Activated CD4-positive, alpha-beta T cell treated with anti-CD3 and anti-CD28 coated beads for 36 hours (primary cell): ENCODE measurements at regions of chr3 and their contacts with region 1.

Region 1: DNA sequence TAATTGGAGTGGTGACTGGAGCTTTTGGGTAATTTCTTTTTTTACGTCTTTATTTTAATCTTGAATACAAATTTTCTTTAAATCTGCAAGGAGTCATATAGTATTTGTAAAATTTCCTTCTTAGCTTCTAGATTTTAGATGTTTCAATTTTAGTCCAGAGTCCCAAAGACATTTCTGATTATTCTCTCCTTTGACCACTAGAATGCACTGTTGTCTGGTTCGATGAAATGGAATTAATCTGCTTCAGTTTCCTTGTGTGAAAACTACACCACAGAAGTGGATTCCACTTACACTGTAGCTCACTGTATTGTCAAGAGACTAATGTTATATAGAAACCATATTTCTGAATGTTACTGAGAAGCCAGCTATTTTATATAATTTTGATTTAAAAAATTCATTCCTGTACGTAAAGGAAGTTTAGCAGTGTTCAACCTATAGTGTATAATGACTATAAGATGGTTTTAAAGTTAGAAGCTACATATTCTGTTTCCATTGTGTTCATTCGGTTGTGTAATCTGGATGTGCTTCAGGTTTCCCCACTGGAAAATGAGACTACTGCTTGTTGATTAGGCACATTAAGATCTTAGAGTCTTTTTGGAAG is 6.1 kb downstream of the GRAMD1C start:
- DNase-seq: no peak
- ATAC-seq: no peak
- H3K4me3 Mint-ChIP-seq: no peak overlapping the region
- H3K27ac Mint-ChIP-seq: no peak overlapping the region
- H3K4me1 Mint-ChIP-seq: no peaks in the 10 kb centered on the region
- H3K27me3 Mint-ChIP-seq: no peaks in the 10 kb centered on the region

Region 2: DNA sequence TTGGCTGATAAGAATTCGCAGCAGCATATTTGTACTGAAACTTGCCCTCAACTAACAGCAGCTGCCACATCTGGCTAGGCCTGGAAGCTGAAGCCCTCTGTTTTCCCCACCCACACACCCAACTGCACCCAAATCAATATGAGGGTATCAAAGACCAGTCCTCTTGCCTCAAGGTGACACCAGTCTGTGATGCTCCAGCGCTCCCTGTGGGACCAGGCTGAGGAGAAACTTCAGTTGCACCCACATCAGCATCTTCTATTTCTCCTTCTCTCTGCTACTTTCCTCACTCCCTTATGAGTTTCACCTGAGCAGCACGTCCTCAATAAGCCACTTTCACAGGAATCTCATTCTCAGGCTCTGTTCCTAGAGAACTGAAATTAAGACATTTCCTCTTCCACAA is 24.9 kb before region 1 on chr3:
- CTCF ChIA-PET with region 1: no interaction called
- POLR2A ChIA-PET with region 1: no interaction called
- intact Hi-C with region 1: no loop called
- DNase-seq: no peak
- ATAC-seq: no peak
- H3K4me3 Mint-ChIP-seq: no peak overlapping the region
- H3K27ac Mint-ChIP-seq: no peak overlapping the region
- H3K4me1 Mint-ChIP-seq: peaks cover under 1% of the 10 kb centered on the region
- H3K27me3 Mint-ChIP-seq: no peaks in the 10 kb centered on the region

Region 3: GRCh38 chr3:113832477-113833164 is 12.1 kb before region 1 on chr3:
- CTCF ChIA-PET with region 1: interaction called, 12 read pairs
- POLR2A ChIA-PET with region 1: no interaction called
- intact Hi-C with region 1: no loop called
- DNase-seq: no peak
- ATAC-seq: peak; percentile 47
- H3K4me3 Mint-ChIP-seq: no peak overlapping the region
- H3K27ac Mint-ChIP-seq: no peak overlapping the region
- H3K4me1 Mint-ChIP-seq: no peaks in the 10 kb centered on the region
- H3K27me3 Mint-ChIP-seq: no peaks in the 10 kb centered on the region

Region 4: GRCh38 chr3:113912552-113913236 is 68.0 kb after region 1 on chr3:
- CTCF ChIA-PET with region 1: interaction called, 32 read pairs
- POLR2A ChIA-PET with region 1: no interaction called
- intact Hi-C with region 1: loop called (anchors 1 to 2 kb)
- DNase-seq: peak; percentile 47
- ATAC-seq: peak; percentile 91
- H3K4me3 Mint-ChIP-seq: peak overlapping the region; percentile 15
- H3K27ac Mint-ChIP-seq: no peak overlapping the region
- H3K4me1 Mint-ChIP-seq: peaks cover 5% of the 10 kb centered on the region
- H3K27me3 Mint-ChIP-seq: no peaks in the 10 kb centered on the region

Region 5: DNA sequence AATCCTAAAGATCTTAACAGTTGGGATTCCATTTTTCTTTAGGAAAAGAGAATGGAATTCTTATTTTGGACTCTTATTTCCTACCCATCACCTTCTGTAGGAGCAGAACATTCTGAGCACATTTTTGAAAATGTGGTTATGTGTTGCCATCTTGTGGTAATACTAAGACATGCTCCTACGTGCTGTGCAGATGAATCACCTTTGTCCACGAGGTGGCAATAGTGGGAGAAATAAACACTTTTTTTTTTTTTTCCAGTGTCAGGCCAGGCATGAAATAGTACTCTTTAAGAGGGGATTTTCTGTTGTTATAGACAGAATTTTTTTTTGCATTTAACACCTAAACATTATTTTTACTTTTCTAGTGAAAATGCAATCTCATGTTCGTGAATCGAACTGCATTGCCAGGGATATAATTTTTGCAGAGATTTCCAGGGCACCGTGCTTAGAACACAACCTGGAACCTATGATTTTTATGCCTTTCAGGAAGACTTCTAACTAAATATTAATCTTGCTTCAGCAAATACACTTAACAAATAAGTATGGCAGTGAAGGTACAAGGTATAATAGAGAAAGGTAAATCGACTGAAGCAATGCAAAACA is 1975.2 kb after region 1 on chr3:
- CTCF ChIA-PET with region 1: no interaction called
- POLR2A ChIA-PET with region 1: no interaction called
- intact Hi-C with region 1: loop called in 1 of 2 experiments (anchors 10 kb)
- DNase-seq: peak; percentile 68
- ATAC-seq: peak; percentile 90
- H3K4me3 Mint-ChIP-seq: no peak overlapping the region
- H3K27ac Mint-ChIP-seq: no peak overlapping the region
- H3K4me1 Mint-ChIP-seq: no peaks in the 10 kb centered on the region
- H3K27me3 Mint-ChIP-seq: no peaks in the 10 kb centered on the region